Activated CD8-positive, alpha-beta T cell treated with anti-CD3 and anti-CD28 coated beads for 36 hours (primary cell): ENCODE measurements at regions of chr4 and their contacts with region 1.

Region 1: DNA sequence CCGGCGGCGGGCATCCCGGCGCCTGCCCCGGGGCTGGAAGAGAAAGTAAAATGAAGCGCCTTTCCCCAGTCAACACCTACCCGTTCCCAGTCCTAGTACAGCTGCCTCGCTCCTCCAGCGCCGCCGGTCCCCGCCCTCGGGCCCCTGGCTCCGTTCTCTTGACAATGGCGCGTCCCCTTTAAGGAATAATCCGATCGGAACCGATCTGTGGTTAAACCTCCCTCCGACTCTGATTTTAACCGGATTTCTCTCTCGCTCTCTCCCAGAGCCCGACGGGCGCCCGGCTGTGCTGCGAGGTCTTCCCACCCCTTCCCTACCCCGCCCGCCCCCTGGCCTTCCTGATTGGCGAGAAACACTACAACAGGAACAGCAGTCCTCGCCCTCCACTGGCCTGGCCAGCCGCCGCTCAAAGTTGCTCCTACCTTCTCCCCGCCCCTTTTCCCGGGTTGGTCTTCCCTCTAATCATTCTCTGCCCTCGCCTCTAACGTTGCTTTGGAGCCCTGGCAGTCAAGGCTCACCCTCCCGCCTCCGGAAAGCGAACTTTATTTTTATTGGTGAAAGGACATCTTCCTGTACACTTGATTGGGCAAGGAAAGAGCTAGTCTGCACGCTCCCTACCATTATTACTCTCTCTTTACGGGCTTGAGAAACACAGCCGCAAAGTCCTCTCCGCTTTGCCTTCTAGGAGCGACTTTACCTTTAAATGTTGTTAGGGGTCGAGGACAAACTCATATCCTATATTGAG is at the start of gene FRYL:
- DNase-seq: peak; percentile 100
- ATAC-seq: peak; percentile 94
- H3K4me3 Mint-ChIP-seq: peak within 1 kb of the TSS; percentile 88
- H3K27ac Mint-ChIP-seq: peak within 1 kb of the TSS; percentile 97
- H3K4me1 Mint-ChIP-seq: peaks cover 44% of the 10 kb centered on the region
- H3K27me3 Mint-ChIP-seq: no peaks in the 10 kb centered on the region
- CTCF ChIP-seq: no peak
- total RNA-seq, gene FRYL: 66.6 to 73.2 TPM

Region 2: DNA sequence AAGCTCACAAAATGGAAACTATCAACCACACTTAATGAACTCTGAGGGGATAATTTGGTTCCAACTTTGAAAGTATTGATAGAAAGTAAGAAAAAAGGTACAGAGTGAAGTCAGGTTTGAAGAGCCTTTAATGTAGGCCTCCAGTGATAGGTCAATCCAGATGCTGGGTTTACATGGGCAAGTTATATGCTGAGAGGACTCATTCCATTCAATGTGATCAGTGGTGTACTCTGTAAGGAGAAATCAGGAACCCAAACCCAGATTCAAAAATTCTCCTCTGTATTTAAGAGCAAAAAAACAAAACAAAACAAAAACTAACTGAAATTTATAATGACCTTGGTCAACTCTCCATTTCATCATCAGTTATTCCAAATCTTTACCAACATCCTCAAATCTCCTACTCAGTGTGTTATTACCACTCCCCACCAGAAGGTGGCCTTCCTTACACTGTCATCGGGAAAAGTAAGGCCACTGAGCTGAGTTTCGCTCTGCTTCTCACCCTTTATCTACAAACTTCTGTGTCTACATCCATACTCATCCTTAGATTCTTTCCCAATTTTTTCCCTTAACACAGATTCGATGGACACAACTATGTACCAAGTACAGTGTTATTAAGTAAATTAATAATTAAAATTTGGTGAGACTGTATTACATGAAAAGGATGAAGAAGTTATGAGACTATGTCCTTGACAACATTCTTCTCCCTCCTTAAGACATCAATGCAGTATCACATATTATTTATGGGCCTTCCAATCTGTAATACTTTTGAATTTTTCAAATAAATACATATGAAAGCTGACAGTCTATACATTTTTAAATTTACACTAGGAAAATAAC is 201.8 kb before region 1 on chr4:
- CTCF ChIA-PET with region 1: interaction called, 6 read pairs
- POLR2A ChIA-PET with region 1: interaction called, 3 read pairs
- intact Hi-C with region 1: loop called (anchors 10 kb)
- DNase-seq: peak; percentile 64
- ATAC-seq: peak; percentile 90
- H3K4me3 Mint-ChIP-seq: no peak overlapping the region
- H3K27ac Mint-ChIP-seq: no peak overlapping the region
- H3K4me1 Mint-ChIP-seq: peaks cover 5% of the 10 kb centered on the region
- H3K27me3 Mint-ChIP-seq: no peaks in the 10 kb centered on the region
- CTCF ChIP-seq: peak; percentile 93

Region 3: DNA sequence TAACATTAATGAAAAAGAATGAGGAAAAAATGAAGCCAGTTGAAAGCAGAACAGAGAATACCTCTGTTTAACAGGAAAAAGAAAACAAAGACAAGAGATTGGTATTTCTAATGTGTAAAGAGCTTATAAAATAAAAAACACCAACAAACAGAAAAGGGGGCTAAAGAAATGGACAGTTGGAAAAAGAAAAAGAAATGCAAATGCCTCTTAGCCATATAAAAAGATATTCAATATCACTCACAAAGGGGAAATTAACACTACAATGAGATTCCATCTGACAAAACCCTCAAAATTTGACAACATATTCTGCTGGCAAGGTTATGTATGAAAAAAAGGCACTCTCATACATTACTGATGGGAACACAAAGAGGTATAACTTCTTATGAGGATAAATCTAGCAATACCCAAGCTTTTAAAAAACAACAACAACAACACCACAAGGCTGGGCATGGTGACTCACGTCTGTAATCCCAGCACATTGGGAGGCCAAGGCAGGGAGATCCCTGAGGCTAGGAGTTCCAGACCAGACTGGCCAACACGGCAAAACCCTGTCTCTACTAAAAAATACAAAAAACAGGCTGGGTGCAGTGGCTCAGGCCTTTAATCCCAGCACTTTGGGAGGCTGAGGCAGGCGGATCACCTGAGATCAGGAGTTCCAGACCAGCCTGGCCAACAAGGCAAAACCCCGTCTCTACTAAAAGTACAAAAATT is 75.9 kb before region 1 on chr4:
- CTCF ChIA-PET with region 1: no interaction called
- POLR2A ChIA-PET with region 1: interaction called, 4 read pairs
- intact Hi-C with region 1: loop called (anchors 5 kb)
- DNase-seq: no peak
- ATAC-seq: no peak
- H3K4me3 Mint-ChIP-seq: no peak overlapping the region
- H3K27ac Mint-ChIP-seq: no peak overlapping the region
- H3K4me1 Mint-ChIP-seq: peaks cover 45% of the 10 kb centered on the region
- H3K27me3 Mint-ChIP-seq: no peaks in the 10 kb centered on the region
- CTCF ChIP-seq: no peak

Region 4: GRCh38 chr4:48801734-48802133 is 21.6 kb after region 1 on chr4:
- CTCF ChIA-PET with region 1: no interaction called
- POLR2A ChIA-PET with region 1: no interaction called
- intact Hi-C with region 1: no loop called
- DNase-seq: no peak
- ATAC-seq: no peak
- H3K4me3 Mint-ChIP-seq: no peak overlapping the region
- H3K27ac Mint-ChIP-seq: no peak overlapping the region
- H3K4me1 Mint-ChIP-seq: peaks cover 2% of the 10 kb centered on the region
- H3K27me3 Mint-ChIP-seq: peaks cover 2% of the 10 kb centered on the region
- CTCF ChIP-seq: no peak

Region 5: GRCh38 chr4:48830706-48831531 is 50.7 kb after region 1 on chr4 and contains the start of gene OCIAD1:
- CTCF ChIA-PET with region 1: no interaction called
- POLR2A ChIA-PET with region 1: no interaction called
- intact Hi-C with region 1: loop called (anchors 2 kb)
- DNase-seq: peak; percentile 98
- ATAC-seq: peak; percentile 97
- H3K4me3 Mint-ChIP-seq: peak within 1 kb of the TSS; percentile 94
- H3K27ac Mint-ChIP-seq: peak within 1 kb of the TSS; percentile 100
- H3K4me1 Mint-ChIP-seq: peaks cover 25% of the 10 kb centered on the region
- H3K27me3 Mint-ChIP-seq: no peaks in the 10 kb centered on the region
- CTCF ChIP-seq: no peak
- total RNA-seq, gene OCIAD1: 103 to 106 TPM

Region 6: GRCh38 chr4:49063670-49064069 is 283.5 kb after region 1 on chr4:
- CTCF ChIA-PET with region 1: no interaction called
- POLR2A ChIA-PET with region 1: no interaction called
- intact Hi-C with region 1: no loop called
- DNase-seq: no peak
- ATAC-seq: no peak
- H3K4me3 Mint-ChIP-seq: no peak overlapping the region
- H3K27ac Mint-ChIP-seq: no peak overlapping the region
- H3K4me1 Mint-ChIP-seq: no peaks in the 10 kb centered on the region
- H3K27me3 Mint-ChIP-seq: peaks cover 2% of the 10 kb centered on the region
- CTCF ChIP-seq: no peak